ENCODE measurements at regions of chr7 and their contacts with region 1.

Region 1: GRCh38 chr7:42940985-42941847 is 9.0 kb downstream of the MRPL32 start:
- DNase-seq: peak; percentile 62
- H3K4me3 ChIP-seq: no peak overlapping the region
- H3K27ac ChIP-seq: no peak overlapping the region
- H3K4me1 ChIP-seq: peaks cover 0 to 3% of the 10 kb centered on the region in 2 experiments; a peak in 1 of 4 replicates
- H3K27me3 ChIP-seq: no peaks in the 10 kb centered on the region
- CTCF ChIP-seq: peak; percentile 99
- EP300 ChIP-seq: no peak
- RAD21 ChIP-seq: peak; percentile 94

Region 2: DNA sequence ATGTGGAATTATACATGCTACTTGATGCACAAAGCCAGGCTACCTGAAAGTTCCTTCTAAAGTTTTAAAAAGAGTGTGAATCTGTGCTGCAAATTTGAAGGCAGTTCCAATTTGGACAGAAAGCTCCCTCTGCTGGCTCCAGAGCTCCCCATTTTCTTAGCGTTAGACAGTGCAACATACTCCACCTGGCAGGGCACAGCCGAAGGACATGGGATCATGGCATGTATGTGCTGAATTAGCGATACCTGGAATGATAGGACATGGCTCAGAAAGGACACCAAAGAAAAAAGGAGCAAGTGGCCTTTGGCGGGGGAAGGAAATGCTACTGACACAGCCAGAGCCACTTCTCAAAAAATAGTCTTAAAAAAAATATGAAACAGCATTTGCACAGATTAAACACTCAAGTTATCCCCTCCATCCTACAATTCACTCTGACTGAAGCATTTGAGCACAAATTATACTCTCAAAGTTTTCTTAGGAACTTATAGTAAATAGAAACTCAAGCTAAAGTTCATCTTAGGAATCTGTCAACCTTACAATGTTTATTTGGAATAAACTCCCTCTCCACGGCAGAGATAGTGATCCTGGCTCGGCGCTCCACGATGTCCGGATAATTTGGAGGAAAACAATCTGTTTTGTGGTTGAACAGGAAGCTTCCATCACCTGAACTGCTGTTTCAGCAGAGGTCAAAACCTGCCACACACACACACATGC is 109.3 kb before region 1 on chr7:
- CTCF ChIA-PET with region 1: no interaction called
- POLR2A ChIA-PET with region 1: no interaction called
- DNase-seq: no peak
- H3K4me3 ChIP-seq: peak overlapping the region in 1 of 2 experiments; percentile 24; a peak in 1 of 4 replicates
- H3K27ac ChIP-seq: no peak overlapping the region
- H3K4me1 ChIP-seq: no peaks in the 10 kb centered on the region
- H3K27me3 ChIP-seq: peaks cover 48% of the 10 kb centered on the region
- CTCF ChIP-seq: peak; percentile 67
- EP300 ChIP-seq: no peak
- RAD21 ChIP-seq: peak; percentile 52

Region 3: DNA sequence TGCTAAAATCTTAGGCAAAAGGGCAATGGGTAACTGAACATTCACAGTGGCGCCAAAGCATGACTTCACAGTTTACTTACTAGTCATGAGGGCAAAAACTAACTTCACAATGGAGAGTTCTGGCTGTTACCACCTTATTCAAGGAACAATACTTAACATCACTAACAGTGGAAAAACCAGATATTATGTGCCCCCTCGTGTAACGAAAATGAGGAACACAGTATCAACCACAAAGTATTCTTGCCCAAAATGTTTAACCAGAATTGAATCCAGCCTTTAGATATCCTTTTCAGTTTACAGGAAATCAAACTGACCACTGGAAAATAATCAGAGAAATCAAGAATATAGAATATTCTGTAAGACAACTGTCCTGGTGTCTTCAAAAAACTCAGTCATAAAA is 38.9 kb before region 1 on chr7:
- CTCF ChIA-PET with region 1: no interaction called
- POLR2A ChIA-PET with region 1: no interaction called
- DNase-seq: no peak
- H3K4me3 ChIP-seq: no peak overlapping the region
- H3K27ac ChIP-seq: no peak overlapping the region
- H3K4me1 ChIP-seq: no peaks in the 10 kb centered on the region
- H3K27me3 ChIP-seq: no peaks in the 10 kb centered on the region
- CTCF ChIP-seq: no peak
- EP300 ChIP-seq: no peak
- RAD21 ChIP-seq: no peak

Region 4: DNA sequence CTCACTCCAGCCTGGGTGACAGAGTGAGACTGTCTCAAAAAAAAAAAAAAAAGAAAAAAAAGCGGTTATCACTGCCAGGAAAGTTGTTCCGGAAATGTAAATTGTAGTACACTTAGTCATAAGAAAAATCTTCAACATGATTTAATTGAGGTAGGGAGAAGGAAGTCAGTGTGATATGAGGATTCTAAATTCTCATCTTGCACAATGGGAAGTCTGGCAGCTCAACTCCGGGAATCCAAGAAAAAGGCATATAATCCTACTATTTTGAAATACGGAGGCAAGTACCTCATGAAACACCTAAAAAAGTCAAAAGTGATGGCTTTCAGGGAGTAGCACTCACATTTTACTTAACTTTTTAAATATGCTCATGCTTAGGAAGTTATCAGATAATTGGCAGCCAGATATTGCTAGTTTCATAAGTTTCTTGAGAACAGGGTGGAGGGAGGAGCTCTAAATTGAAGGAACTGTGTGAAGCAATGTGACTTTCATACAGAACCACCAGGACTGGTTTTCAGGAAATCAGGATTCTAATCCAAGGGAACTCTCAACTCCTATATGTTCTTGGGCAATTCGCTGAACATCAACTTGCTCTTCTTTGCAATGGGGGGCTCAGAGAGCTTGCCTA is 26.7 kb before region 1 on chr7:
- CTCF ChIA-PET with region 1: interaction called, 15 read pairs
- POLR2A ChIA-PET with region 1: no interaction called
- DNase-seq: no peak
- H3K4me3 ChIP-seq: no peak overlapping the region
- H3K27ac ChIP-seq: peak overlapping the region in 1 of 2 experiments; percentile 60; a peak in 2 of 4 replicates
- H3K4me1 ChIP-seq: peaks cover 0 to 16% of the 10 kb centered on the region in 2 experiments; a peak in 2 of 4 replicates
- H3K27me3 ChIP-seq: no peaks in the 10 kb centered on the region
- CTCF ChIP-seq: no peak
- EP300 ChIP-seq: no peak
- RAD21 ChIP-seq: no peak

Region 5: GRCh38 chr7:42953994-42954393 is 12.8 kb after region 1 on chr7:
- CTCF ChIA-PET with region 1: interaction called, 38 read pairs
- POLR2A ChIA-PET with region 1: no interaction called
- DNase-seq: no peak
- H3K4me3 ChIP-seq: no peak overlapping the region
- H3K27ac ChIP-seq: no peak overlapping the region
- H3K4me1 ChIP-seq: no peaks in the 10 kb centered on the region
- H3K27me3 ChIP-seq: no peaks in the 10 kb centered on the region
- CTCF ChIP-seq: no peak
- EP300 ChIP-seq: no peak
- RAD21 ChIP-seq: no peak

Region 6: DNA sequence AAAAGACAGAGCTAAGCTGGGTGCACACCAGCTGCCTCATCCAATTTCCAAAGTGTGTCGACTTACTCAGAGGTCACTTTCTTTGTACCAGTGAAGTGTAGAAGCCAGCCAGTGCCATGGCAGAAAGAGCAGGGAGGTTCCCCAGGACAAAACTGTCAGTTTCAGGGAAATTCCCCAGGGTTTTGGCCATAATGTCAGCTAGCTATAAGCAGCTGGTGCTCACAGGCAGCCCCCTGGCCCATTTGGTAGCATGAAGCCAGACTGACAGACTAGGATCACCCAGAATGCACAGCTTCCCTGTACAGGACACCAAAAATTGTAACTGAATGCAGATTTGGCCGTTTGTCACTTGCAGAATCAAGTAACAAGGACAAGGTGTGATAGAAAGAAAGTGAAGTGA is 19.5 kb after region 1 on chr7:
- CTCF ChIA-PET with region 1: interaction called, 17 read pairs
- POLR2A ChIA-PET with region 1: no interaction called
- DNase-seq: no peak
- H3K4me3 ChIP-seq: no peak overlapping the region
- H3K27ac ChIP-seq: no peak overlapping the region
- H3K4me1 ChIP-seq: no peaks in the 10 kb centered on the region
- H3K27me3 ChIP-seq: peaks cover 20% of the 10 kb centered on the region; the same call in 1 of the 2 replicates
- CTCF ChIP-seq: no peak
- EP300 ChIP-seq: no peak
- RAD21 ChIP-seq: no peak

Region 7: DNA sequence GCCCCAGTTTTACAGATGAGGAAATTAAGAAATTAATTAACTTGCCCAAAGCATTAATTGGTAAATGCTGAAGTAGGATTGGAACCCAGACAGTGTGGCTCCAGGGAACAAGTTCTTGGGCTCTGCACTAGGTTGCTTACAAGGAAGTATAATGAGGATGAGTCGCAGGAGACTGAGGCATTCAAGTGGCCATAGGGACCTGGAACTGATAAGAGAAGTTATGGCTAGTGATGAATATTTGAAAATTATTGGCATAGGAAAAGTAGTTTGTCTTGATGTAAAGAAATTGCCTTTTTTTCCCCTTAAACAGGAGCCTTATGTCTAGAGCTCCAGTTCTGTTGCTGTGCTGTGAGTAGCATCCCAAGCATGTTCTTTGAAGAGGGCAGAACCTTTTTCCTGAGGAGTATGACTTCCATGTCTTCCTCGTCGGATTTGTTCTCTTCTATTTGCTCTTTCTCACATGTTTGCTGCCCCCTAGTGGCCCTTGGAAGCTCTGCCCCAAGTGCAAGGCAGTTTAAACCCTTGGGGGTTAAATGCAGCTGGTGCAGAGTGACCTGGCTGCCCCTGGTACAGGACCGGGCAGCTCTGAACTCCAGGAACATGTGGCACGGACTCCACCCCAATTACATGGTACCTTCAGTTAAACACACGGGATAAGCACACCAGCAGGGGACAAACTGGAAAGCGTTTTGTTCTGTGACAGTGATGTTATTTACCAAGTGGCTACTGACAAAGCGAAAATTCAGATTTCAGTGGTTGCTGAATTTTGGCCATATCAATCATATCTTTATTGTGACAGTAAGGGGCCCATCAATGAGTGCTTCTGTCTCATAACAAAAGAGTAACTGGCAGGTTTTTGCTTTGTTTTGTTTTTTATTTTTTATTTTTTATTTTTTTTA is 320.0 kb after region 1 on chr7:
- CTCF ChIA-PET with region 1: interaction called, 28 read pairs
- POLR2A ChIA-PET with region 1: no interaction called
- DNase-seq: peak; percentile 81
- H3K4me3 ChIP-seq: no peak overlapping the region; a peak in 1 of 4 replicates
- H3K27ac ChIP-seq: no peak overlapping the region
- H3K4me1 ChIP-seq: no peaks in the 10 kb centered on the region
- H3K27me3 ChIP-seq: peaks cover 9% of the 10 kb centered on the region; the same call in 1 of the 2 replicates
- CTCF ChIP-seq: peak; percentile 100
- EP300 ChIP-seq: no peak
- RAD21 ChIP-seq: peak; percentile 89

Region 8: DNA sequence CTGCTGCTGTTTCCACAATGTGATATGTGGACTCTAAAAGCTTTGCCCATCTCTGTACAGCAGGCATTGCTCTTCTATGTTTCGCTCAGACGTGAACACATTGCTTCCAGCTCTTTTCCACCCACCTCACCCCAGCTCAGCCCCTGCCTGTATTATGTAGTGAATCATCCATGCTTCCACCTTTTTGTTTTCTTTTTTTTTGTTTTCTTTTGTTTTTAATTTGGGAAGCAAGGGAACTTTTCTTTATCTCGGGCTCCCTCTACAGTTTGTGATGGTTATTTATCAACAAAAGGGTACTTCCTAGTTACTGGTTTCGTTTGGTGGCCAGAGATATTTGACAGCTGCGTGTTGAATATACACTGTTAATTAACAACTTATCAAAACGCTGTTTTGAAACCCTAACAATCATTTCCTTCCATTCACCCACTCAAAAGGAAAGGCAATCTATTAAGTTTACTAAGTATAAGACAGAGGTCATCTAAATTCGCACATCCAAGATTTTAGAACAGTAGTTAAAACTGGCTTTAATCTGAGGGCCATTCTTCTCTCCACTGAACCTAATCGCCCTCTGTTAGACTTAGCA is 513.8 kb after region 1 on chr7:
- CTCF ChIA-PET with region 1: interaction called, 16 read pairs
- POLR2A ChIA-PET with region 1: no interaction called
- DNase-seq: peak; percentile 70
- H3K4me3 ChIP-seq: no peak overlapping the region; a peak in 1 of 4 replicates
- H3K27ac ChIP-seq: no peak overlapping the region
- H3K4me1 ChIP-seq: peaks cover 0 to 2% of the 10 kb centered on the region in 2 experiments; a peak in 1 of 4 replicates
- H3K27me3 ChIP-seq: peaks cover 4% of the 10 kb centered on the region; the same call in 1 of the 2 replicates
- CTCF ChIP-seq: peak; percentile 70
- EP300 ChIP-seq: no peak
- RAD21 ChIP-seq: peak; percentile 76

Region 9: DNA sequence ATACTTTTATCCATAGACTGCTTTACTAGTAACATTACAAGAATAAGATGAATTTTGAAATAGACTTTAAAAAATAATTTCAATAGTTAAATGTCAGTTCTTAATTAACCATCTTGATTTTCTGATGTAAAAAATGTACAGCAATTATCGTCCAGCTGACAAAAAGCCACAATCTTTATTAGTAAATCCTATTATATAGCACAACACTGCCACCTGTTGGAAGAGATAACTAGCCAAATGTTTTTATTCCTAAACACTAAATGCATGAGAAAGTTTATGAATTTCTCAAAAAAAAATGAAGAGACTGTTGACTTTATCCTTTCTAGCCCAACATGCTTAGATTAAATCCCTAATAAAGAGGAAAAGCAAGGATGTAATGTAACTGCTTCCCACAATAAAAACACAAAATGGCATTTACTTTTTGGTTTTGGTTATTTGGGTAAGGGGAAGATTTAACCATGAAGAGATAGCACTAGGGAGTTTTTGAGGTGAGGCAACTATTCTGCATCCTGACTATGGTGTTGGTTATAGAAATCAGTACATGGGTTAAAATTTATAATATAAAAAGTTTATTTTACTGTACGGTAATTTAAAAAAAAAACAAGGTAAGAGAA is 780.1 kb after region 1 on chr7:
- CTCF ChIA-PET with region 1: interaction called, 14 read pairs
- POLR2A ChIA-PET with region 1: no interaction called
- DNase-seq: peak; percentile 45
- H3K4me3 ChIP-seq: no peak overlapping the region; a peak in 1 of 4 replicates
- H3K27ac ChIP-seq: no peak overlapping the region; a peak in 1 of 4 replicates
- H3K4me1 ChIP-seq: no peaks in the 10 kb centered on the region; a peak in 1 of 4 replicates
- H3K27me3 ChIP-seq: no peaks in the 10 kb centered on the region
- CTCF ChIP-seq: peak; percentile 99
- EP300 ChIP-seq: no peak
- RAD21 ChIP-seq: peak; percentile 79